ENCODE measurements at regions of chr9 and their contacts with region 1.

Region 1: GRCh38 chr9:131635285-131635684 is 90.0 kb downstream of the PRRT1B start:
- DNase-seq: peak; percentile 96
- H3K4me3 ChIP-seq: no peak overlapping the region
- H3K27ac ChIP-seq: peak overlapping the region; percentile 82
- H3K4me1 ChIP-seq: peaks cover 43% of the 10 kb centered on the region
- H3K27me3 ChIP-seq: no peaks in the 10 kb centered on the region
- CTCF ChIP-seq: peak in 1 of 2 donors; percentile 21

Region 2: DNA sequence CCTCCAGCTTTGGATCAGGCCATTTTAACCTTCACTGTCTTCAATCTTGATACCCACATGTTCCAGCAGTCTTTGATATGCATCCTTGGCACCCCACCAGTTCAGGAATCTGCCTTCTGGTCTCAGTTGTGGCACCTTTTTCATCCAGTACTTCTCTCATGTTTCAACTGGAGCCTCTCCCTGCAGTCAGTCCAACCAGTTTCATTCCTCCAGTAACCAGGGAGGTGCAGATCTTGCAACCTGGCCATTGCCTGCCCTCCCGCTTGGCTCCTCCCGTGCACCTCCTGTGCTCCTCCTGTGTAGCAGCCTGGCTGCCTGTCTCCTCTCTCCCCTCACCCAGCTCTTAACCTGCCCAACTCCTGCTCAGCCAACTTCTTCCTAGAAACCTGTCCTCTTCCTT is 1035.7 kb before region 1 on chr9:
- CTCF ChIA-PET with region 1: no interaction called
- dilution Hi-C with region 1: no loop called
- in situ Hi-C with region 1: no loop called
- intact Hi-C with region 1: no loop called
- DNase-seq: no peak
- H3K4me3 ChIP-seq: no peak overlapping the region
- H3K27ac ChIP-seq: no peak overlapping the region
- H3K4me1 ChIP-seq: no peaks in the 10 kb centered on the region
- H3K27me3 ChIP-seq: no peaks in the 10 kb centered on the region
- CTCF ChIP-seq: no peak

Region 3: GRCh38 chr9:131590908-131591844 is 44.1 kb before region 1 on chr9:
- CTCF ChIA-PET with region 1: no interaction called
- dilution Hi-C with region 1: no loop called
- in situ Hi-C with region 1: no loop called
- intact Hi-C with region 1: loop called (anchors 1 kb)
- DNase-seq: peak; percentile 62
- H3K4me3 ChIP-seq: no peak overlapping the region
- H3K27ac ChIP-seq: no peak overlapping the region
- H3K4me1 ChIP-seq: peaks cover 6% of the 10 kb centered on the region
- H3K27me3 ChIP-seq: no peaks in the 10 kb centered on the region
- CTCF ChIP-seq: peak; percentile 81 to 94

Region 4: GRCh38 chr9:131650254-131650653 is 15.0 kb after region 1 on chr9:
- CTCF ChIA-PET with region 1: no interaction called
- dilution Hi-C with region 1: no loop called
- in situ Hi-C with region 1: no loop called
- intact Hi-C with region 1: loop called (anchors 1 kb)
- DNase-seq: peak; percentile 57
- H3K4me3 ChIP-seq: no peak overlapping the region
- H3K27ac ChIP-seq: peak overlapping the region; percentile 26
- H3K4me1 ChIP-seq: peaks cover 27% of the 10 kb centered on the region
- H3K27me3 ChIP-seq: no peaks in the 10 kb centered on the region
- CTCF ChIP-seq: no peak

Region 5: DNA sequence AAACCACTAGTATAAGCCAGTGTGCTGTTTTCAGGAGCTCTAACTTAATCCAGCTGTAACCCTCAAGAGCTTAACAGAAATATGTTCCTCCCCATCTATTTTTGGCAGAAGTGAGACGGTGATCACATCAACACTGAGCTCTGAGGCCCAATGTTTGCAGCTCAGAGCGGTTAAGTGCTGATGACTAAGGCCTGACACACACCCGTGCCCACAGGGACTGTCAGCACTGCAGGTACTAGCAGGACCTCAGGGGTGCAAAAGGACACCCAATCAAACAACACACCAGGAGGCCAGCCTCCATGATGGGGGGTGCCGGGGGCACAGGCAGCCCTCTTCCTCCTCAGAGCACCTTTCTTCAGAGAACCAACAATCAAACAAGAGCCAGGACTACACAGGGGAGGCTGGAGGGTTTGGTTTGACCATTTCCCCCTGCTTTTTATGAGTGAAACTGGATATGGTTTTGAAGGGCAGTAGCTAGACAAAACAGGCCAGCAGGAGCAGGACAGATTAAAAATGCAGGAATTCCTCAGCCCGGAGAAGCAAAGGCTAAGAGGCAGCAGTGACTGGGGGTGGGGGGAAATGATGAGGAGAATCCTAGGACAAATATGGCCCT is 43.3 kb after region 1 on chr9:
- CTCF ChIA-PET with region 1: interaction called, 11 read pairs
- dilution Hi-C with region 1: no loop called
- in situ Hi-C with region 1: no loop called
- intact Hi-C with region 1: loop called (anchors 2 kb)
- DNase-seq: peak; percentile 96
- H3K4me3 ChIP-seq: no peak overlapping the region
- H3K27ac ChIP-seq: peak overlapping the region; percentile 35
- H3K4me1 ChIP-seq: peaks cover 44% of the 10 kb centered on the region
- H3K27me3 ChIP-seq: no peaks in the 10 kb centered on the region
- CTCF ChIP-seq: no peak

Region 6: GRCh38 chr9:131714161-131714646 is 78.9 kb after region 1 on chr9:
- CTCF ChIA-PET with region 1: no interaction called
- dilution Hi-C with region 1: no loop called
- in situ Hi-C with region 1: no loop called
- intact Hi-C with region 1: loop called (anchors 1 kb)
- DNase-seq: peak; percentile 93
- H3K4me3 ChIP-seq: peak overlapping the region in 2 of 3 experiments; percentile 4 to 34
- H3K27ac ChIP-seq: peak overlapping the region; percentile 97
- H3K4me1 ChIP-seq: peaks cover 35% of the 10 kb centered on the region
- H3K27me3 ChIP-seq: no peaks in the 10 kb centered on the region
- CTCF ChIP-seq: no peak

Measured in mammary epithelial cell (primary cell).